Activated T-helper 1 cell treated with anti-CD3 and anti-CD28 coated beads, Interleukin-12 subunit alpha, Interleukin-12 subunit beta, Interleukin-2, Interleukin-4 antibody, amounts not matched to agents 30 ng/mL and 10 ng/mL and 1 ng/mL, durations not matched to agents 14 hours and 24 hours and 36 hours (primary cell): ENCODE measurements at regions of chr5 and their contacts with region 1.

Region 1: GRCh38 chr5:40386289-40386688 is 293.4 kb upstream of the PTGER4 start:
- DNase-seq: peak; percentile 19
- H3K4me3 Mint-ChIP-seq: no peak overlapping the region
- H3K27ac Mint-ChIP-seq: peak overlapping the region; percentile 19
- H3K4me1 Mint-ChIP-seq: peaks cover 88% of the 10 kb centered on the region
- H3K27me3 Mint-ChIP-seq: no peaks in the 10 kb centered on the region

Region 2: DNA sequence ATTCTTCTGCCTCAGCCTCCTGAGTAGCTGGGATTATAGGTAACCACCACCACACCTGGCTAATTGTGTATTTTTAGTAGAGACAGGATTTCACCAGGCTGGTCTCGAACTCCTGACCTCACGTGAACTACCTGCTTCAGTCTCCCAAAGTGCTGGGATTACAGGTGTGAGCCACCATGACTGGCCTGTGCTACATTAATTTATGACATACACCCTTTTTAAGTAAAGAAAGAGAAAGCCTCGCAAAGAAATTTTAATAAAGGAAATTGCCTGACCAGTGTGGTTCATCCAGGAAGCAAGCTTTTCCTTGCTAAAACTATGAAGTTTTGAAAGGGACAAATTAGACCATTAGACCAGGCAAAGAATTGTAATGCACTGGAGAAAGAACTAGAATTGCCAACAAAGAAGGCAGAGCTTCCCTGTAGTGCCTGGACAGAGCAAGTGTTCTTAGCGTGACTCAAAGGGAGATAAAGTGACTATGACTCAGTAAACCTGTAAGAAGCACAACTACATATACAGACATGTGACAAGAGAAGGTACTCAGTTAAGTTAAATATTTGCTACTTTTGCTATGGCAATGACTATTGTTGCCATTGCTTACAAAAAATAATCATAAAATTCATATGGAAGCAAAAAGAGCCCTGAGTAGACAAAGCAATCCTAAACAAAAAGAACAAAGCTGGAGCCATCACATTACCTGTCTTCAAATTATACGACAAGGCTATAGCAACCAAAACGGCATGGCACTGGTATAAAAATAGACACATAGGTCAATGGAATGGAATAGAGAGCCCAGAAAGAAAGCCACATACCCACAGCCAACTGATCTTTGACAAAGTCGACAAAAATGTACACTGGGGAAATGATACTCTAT is 1221.5 kb before region 1 on chr5:
- intact Hi-C with region 1: loop called (anchors 10 kb)
- DNase-seq: no peak
- H3K4me3 Mint-ChIP-seq: peak overlapping the region; percentile 72
- H3K27ac Mint-ChIP-seq: peak overlapping the region; percentile 96
- H3K4me1 Mint-ChIP-seq: peaks cover 85% of the 10 kb centered on the region
- H3K27me3 Mint-ChIP-seq: no peaks in the 10 kb centered on the region

Region 3: GRCh38 chr5:39948867-39949468 is 437.3 kb before region 1 on chr5:
- intact Hi-C with region 1: loop called (anchors 1 kb)
- DNase-seq: peak; percentile 46
- H3K4me3 Mint-ChIP-seq: no peak overlapping the region
- H3K27ac Mint-ChIP-seq: peak overlapping the region; percentile 7
- H3K4me1 Mint-ChIP-seq: peaks cover 6% of the 10 kb centered on the region
- H3K27me3 Mint-ChIP-seq: peaks cover 5% of the 10 kb centered on the region

Region 4: GRCh38 chr5:40307920-40308319 is 78.4 kb before region 1 on chr5:
- intact Hi-C with region 1: loop called (anchors 2 kb)
- DNase-seq: no peak
- H3K4me3 Mint-ChIP-seq: no peak overlapping the region
- H3K27ac Mint-ChIP-seq: no peak overlapping the region
- H3K4me1 Mint-ChIP-seq: peaks cover 12% of the 10 kb centered on the region
- H3K27me3 Mint-ChIP-seq: no peaks in the 10 kb centered on the region

Region 5: GRCh38 chr5:40404613-40405012 is 18.3 kb after region 1 on chr5:
- intact Hi-C with region 1: loop called (anchors 1 kb)
- DNase-seq: peak; percentile 12
- H3K4me3 Mint-ChIP-seq: peak overlapping the region; percentile 59
- H3K27ac Mint-ChIP-seq: peak overlapping the region; percentile 99
- H3K4me1 Mint-ChIP-seq: peaks cover 86% of the 10 kb centered on the region
- H3K27me3 Mint-ChIP-seq: no peaks in the 10 kb centered on the region

Region 6: DNA sequence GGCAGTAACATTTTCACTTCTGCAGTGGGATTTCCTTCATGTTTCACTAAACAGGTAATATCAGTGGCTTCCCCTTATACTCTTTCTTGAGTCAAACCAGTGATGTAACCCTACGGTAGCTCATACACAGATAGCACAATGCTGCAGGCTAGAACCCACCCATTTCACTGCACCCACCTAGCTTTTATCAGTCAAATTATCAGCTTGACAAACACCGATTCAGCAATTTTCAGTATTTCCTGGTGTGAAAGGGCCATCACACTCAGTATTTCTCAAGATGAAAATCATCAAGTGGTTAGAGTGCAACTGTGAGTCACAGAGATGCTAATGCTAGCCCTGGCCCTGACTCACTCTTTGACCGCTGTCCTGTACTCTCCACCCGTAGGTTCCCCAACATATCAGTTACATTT is 51.2 kb after region 1 on chr5:
- intact Hi-C with region 1: loop called (anchors 1 kb)
- DNase-seq: no peak
- H3K4me3 Mint-ChIP-seq: peak overlapping the region; percentile 13
- H3K27ac Mint-ChIP-seq: peak overlapping the region; percentile 71
- H3K4me1 Mint-ChIP-seq: peaks cover 84% of the 10 kb centered on the region
- H3K27me3 Mint-ChIP-seq: no peaks in the 10 kb centered on the region

Region 7: GRCh38 chr5:40557501-40557900 is 171.2 kb after region 1 on chr5:
- intact Hi-C with region 1: no loop called
- DNase-seq: no peak
- H3K4me3 Mint-ChIP-seq: no peak overlapping the region
- H3K27ac Mint-ChIP-seq: no peak overlapping the region
- H3K4me1 Mint-ChIP-seq: peaks cover 15% of the 10 kb centered on the region
- H3K27me3 Mint-ChIP-seq: no peaks in the 10 kb centered on the region

Region 8: GRCh38 chr5:40736103-40736875 is 350.0 kb after region 1 on chr5:
- intact Hi-C with region 1: loop called (anchors 1 kb)
- DNase-seq: no peak
- H3K4me3 Mint-ChIP-seq: no peak overlapping the region
- H3K27ac Mint-ChIP-seq: no peak overlapping the region
- H3K4me1 Mint-ChIP-seq: peaks cover 22% of the 10 kb centered on the region
- H3K27me3 Mint-ChIP-seq: no peaks in the 10 kb centered on the region